ENCODE measurements at regions of chrX and their contacts with region 1.

Region 1: DNA sequence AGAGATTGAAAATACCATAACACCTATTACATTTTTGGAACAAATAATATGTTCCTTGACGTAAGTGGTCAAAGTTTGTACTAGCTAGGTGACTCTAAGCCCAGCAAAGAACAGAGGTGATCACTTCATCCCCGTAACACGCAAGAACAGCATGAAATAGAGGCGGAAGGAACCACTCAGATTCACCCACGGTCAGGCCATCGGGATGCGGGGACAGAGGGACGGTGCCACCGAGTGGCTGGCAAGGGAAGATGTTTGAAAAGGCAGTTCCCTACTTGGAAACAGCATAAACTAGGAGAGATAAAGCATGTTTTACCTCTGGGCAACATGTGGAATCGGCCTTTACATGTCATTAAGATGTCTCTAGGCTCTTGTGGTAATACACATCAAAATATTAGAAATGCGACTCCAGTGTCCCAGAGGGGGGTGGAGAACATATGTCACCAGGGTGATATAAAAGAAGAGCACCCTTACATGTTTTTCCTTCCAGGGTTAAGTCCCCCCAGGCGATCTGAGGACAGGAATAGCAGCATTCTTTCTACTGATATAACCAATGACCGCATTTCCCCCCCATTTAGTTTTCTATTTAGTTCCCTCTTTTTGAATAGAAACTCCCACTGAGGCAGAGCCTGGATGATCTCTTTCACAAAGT is 84.0 kb downstream of the PHKA2 start:
- DNase-seq: no peak
- ATAC-seq: peak; percentile 29

Region 2: DNA sequence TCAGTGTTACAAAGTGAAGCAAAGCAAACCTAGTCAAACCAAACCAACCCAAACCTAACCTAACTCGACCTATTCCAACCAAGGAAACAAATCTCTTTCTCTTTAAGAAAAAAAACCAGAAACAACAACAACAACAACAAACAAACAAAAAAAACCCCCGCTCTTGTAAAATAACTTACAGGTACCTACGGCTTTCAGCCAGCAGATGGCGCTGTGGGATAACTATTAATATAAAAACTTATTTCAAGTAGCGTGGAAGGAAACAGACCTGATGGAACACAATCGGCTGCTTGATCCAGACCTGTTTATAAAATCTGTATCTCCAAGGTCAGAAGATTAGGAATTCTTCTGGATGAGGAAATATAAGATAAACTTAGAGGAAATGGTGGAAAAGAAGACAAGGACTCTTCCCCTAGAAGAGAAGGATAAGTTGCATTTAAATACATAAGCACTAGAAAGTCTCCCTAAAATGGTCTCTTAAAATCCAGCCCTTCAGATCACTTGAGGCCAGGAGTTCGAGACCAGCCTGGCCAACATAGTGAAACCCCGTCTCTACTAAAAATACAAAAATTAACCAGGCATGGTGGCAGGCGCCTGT is 508.9 kb before region 1 on chrX:
- intact Hi-C with region 1: loop called (anchors 10 kb)
- DNase-seq: peak; percentile 69
- ATAC-seq: no peak

Region 3: GRCh38 chrX:18410043-18410442 is 489.9 kb before region 1 on chrX:
- intact Hi-C with region 1: loop called (anchors 5 kb)
- DNase-seq: no peak
- ATAC-seq: peak; percentile 73

Region 4: DNA sequence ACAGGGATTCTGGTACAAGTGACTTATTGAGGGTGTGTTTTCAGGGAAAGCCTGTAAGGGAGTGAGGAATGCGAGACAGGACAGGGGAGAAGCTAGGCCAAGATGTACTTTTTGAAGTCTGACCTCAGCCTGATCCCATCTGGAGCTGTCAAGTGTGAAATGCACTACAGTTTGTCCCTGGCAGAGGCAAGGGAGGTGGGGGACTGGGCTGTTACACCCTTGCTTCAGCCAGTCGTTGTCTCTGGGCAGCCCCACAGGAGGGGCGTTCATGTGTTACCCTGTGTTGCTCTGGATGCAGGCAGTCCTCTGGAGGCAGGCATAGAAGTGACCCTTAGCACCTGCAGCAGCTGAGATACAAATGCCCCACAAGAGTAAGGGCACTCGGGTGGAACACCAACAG is 166.6 kb before region 1 on chrX:
- intact Hi-C with region 1: no loop called
- DNase-seq: no peak
- ATAC-seq: peak; percentile 58

Region 5: GRCh38 chrX:19107035-19107434 is 207.1 kb after region 1 on chrX:
- intact Hi-C with region 1: no loop called
- DNase-seq: no peak
- ATAC-seq: no peak